Esophagus squamous epithelium (tissue), 5 donors: ENCODE measurements at regions of chr2 and their contacts with region 1.

Region 1: DNA sequence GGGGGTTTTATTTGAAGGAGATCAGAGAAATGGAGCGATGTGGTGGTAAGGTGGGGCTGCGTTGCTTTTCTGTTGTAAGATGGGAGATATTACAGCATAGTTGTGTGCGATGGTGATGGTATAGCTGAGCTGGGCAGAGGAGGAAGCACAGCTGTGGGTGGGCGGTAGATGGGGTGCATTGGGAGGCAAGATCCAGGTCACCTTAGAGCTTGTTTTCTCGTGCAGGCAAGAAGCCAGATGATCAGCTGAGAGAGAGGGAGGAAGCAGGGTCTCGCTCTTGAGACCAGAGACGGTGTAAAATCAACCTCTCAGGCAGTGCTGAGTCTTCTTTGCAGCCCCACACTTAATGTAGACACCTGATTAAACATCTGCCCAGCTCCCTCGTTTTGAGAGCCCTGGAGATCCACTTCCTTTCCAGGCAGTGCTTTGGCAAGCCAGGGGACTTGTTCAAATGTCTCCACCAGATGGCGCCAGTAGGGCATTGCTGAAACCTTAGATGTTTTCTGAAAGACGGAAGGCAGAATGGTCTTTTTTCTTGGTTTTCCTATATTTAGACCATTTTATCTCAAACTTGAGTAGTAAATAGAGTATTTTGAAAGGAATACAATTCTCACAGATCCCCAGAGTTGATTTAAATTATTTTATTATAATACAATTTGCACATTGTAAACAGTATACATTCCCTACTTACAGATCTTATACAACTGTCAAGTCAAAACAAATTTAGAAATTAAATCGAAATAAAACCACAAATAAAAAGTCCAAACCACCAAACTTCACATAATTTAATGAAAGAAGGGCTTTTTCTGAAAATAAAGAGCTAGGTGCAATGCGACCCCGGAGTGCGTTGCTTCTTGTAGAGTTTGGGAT is 21.1 kb upstream of the LYPD6B start:
- DNase-seq: no peak
- H3K4me3 ChIP-seq: no peak overlapping the region
- H3K27ac ChIP-seq: no peak overlapping the region
- H3K4me1 ChIP-seq: peaks cover 0 to 27% (median 7%) of the 10 kb centered on the region in 3 donors
- H3K27me3 ChIP-seq: peaks cover 0 to 31% (median 0%) of the 10 kb centered on the region in 4 donors
- CTCF ChIP-seq: peak; percentile 64 to 88 (median 84)
- POLR2A ChIP-seq: no peak

Region 2: DNA sequence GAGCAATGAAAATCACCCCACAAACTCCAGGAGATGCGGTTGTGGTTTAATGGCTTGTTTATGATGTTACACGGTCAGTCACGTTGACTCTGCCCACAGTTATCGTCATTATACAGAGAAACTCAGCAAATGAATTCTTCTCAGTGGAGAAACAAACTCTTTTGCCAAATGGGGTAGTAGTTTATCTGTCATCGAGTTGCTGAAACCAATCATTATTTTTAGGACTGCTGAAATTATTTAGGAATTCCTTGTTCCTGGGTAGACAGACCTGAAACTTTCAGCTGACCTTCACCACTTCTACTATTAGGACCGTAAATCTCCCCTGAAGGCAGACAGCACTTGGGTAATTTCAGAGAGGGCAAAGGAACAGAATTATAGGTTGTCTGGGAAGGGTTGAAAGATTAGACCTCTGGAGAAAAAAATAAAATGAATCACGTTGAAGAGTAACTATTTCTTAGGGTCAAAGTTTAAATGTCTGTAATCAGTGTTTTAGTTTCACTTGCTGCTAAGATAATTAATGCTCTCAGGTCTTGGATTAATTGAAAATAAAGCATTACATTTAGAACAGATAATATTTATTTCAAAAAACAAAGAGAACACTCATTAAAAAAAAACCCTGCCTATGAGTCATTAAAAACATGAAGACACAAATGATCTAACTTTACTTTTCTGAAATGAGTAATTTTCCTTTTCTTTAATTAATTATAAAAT is 261.0 kb after region 1 on chr2:
- intact Hi-C with region 1: no loop called
- DNase-seq: no peak
- H3K4me3 ChIP-seq: no peak overlapping the region
- H3K27ac ChIP-seq: no peak overlapping the region
- H3K4me1 ChIP-seq: no peaks in the 10 kb centered on the region
- H3K27me3 ChIP-seq: no peaks in the 10 kb centered on the region
- CTCF ChIP-seq: no peak
- POLR2A ChIP-seq: no peak

Region 3: DNA sequence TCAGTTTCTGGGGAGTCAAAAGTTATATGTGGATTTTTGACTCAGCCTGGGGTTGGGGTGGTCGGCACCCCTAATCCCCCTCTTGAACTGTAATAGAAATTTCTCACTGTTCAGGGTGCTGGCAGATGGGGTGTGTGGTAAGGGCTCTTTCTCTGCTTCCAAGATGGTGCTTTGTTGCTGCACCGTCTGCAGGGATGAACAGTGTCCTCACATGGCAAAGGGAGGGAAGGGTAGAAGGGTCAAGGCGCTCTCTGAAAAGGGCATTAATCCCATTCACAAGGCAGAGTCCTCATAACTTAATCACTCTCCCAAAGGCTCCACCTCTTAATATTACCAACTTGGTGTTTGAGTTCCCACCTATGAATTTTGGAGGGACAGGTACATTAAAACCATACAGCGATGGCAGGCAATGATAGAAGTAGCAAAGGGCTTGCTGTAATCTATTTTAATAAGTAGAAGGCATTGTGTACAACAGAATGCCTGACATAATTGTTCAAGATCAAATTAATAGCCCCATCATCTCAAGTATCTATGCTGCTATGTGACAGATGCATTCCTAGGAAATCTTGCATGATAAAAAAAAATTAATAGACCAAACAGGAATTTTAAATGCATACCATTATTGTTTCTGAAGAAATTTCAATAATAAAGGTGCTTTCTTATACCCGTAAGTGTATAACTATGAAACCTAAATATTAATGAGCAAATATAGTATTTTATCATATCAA is 542.2 kb after region 1 on chr2:
- intact Hi-C with region 1: loop called (anchors 5 kb)
- DNase-seq: no peak
- H3K4me3 ChIP-seq: no peak overlapping the region
- H3K27ac ChIP-seq: no peak overlapping the region
- H3K4me1 ChIP-seq: peaks cover 0 to 3% (median 0%) of the 10 kb centered on the region in 3 donors
- H3K27me3 ChIP-seq: no peaks in the 10 kb centered on the region
- CTCF ChIP-seq: no peak
- POLR2A ChIP-seq: no peak